ENCODE measurements at regions of chr7 and their contacts with region 1.

Region 1: DNA sequence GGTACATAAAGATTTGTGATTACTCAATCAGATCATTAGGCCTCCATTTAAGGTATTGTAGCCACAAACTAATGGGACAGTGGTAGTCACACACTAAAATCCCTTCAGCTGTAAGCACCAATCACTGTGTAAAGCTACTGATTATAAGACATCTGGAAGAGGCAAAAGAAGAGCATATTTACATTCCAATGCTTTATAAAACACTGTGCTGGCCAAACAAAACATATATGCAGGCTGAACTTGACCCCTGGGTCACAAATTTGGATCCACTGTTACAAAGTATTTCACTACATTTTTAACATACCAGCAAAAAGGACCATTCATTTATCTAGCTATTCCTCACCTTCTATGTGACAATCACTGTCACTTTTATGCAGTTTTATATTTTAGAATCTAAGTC is 41.4 kb upstream of the ANLN start:
- DNase-seq: no peak
- ATAC-seq: no peak
- H3K4me3 ChIP-seq: no peak overlapping the region
- H3K4me3 Mint-ChIP-seq: no peak overlapping the region
- H3K27ac ChIP-seq: no peak overlapping the region
- H3K27ac Mint-ChIP-seq: no peak overlapping the region
- H3K4me1 ChIP-seq: no peaks in the 10 kb centered on the region
- H3K4me1 Mint-ChIP-seq: no peaks in the 10 kb centered on the region
- H3K27me3 ChIP-seq: no peaks in the 10 kb centered on the region
- H3K27me3 Mint-ChIP-seq: peaks cover 5% of the 10 kb centered on the region
- CTCF ChIP-seq: no peak

Region 2: DNA sequence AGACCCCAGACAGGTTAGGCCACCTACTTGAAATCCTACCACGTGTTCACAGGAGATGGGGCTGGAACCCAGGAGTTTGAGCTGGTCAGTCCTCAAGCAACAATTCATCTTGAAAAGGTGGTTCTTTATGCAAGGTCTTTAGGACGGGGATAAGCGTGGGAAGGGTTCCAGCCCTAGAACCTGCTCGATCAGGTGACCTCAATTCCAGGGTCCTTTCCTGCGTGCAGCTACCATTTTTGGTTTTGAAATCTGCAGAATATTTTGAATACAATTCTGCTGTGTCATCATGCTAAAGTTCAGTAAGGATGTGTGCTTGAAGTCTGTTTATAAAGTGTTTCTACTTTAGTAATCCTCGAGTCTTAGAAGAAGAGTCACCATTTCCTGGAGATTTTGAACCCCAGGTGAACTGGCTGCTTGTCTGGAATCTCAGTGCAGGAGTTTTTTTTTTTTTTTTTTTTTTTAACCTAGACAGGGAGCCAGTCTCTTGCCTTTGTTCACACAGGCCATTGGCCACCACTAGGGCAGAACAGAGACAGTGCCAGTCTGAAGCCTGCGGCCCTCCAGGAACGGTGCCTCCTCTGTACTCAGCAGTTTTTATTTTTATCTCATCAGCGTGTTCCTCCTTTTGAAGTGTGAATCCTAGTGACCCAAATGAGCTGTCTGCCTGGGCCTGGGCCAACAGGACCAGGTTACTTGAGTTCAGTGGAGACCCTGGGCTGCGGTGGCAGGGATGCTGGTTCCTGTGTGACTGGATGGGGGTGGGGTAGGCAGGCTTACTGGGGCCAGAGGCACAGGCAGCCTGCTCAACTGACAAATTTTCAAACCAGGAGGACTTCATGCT is 140.6 kb before region 1 on chr7:
- CTCF ChIA-PET with region 1: no interaction called
- POLR2A ChIA-PET with region 1: interaction called, 11 read pairs
- intact Hi-C with region 1: no loop called
- DNase-seq: no peak
- ATAC-seq: no peak
- H3K4me3 ChIP-seq: no peak overlapping the region
- H3K4me3 Mint-ChIP-seq: no peak overlapping the region
- H3K27ac ChIP-seq: no peak overlapping the region
- H3K27ac Mint-ChIP-seq: no peak overlapping the region
- H3K4me1 ChIP-seq: no peaks in the 10 kb centered on the region
- H3K4me1 Mint-ChIP-seq: no peaks in the 10 kb centered on the region
- H3K27me3 ChIP-seq: no peaks in the 10 kb centered on the region
- H3K27me3 Mint-ChIP-seq: peaks cover 11% of the 10 kb centered on the region
- CTCF ChIP-seq: no peak

Region 3: DNA sequence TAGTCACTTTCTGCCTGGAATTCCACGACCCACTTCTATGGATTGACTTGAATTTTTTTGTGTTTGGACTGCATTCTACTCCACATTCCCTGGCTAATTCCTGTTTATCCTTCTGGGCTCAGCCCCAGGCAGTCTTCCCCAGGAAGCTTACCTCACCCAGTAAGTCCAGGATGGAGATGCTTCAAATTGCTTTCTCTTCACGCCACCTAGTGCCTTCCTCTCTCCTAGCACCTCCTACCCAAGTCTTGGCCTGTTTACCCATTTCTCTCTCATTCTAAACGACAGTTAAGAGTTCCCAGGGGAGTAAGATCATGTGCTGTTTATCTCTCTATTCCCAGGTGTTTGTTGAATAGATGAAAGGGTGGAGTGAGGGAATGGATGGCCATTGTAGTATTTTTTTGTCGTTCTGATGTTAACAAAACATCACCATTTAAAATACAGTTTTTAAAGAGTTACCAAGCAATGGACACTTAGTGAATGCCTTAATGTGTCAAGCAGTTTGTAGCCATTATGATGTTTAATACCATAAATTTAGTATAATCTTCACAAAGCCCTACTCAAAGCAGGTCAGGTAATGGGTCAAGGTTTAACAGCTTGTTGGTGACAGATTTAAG is 1970.7 kb after region 1 on chr7:
- CTCF ChIA-PET with region 1: no interaction called
- POLR2A ChIA-PET with region 1: no interaction called
- intact Hi-C with region 1: no loop called
- DNase-seq: peak; percentile 28
- ATAC-seq: peak; percentile 57
- H3K4me3 ChIP-seq: no peak overlapping the region
- H3K4me3 Mint-ChIP-seq: no peak overlapping the region
- H3K27ac ChIP-seq: no peak overlapping the region
- H3K27ac Mint-ChIP-seq: no peak overlapping the region
- H3K4me1 ChIP-seq: peaks cover 4 to 10% of the 10 kb centered on the region in 2 donors
- H3K4me1 Mint-ChIP-seq: peaks cover 8% of the 10 kb centered on the region
- H3K27me3 ChIP-seq: peaks cover 0 to 3% (median 0%) of the 10 kb centered on the region in 4 experiments
- H3K27me3 Mint-ChIP-seq: peaks cover 15% of the 10 kb centered on the region
- CTCF ChIP-seq: peak; percentile 28